ENCODE measurements at regions of chr11 and their contacts with region 1.

Region 1: GRCh38 chr11:62880803-62881578 is at the start of gene SLC3A2:
- DNase-seq: peak; percentile 95
- H3K4me3 Mint-ChIP-seq: peak within 1 kb of the TSS; percentile 100
- H3K27ac Mint-ChIP-seq: peak within 1 kb of the TSS; percentile 100
- H3K4me1 Mint-ChIP-seq: peaks cover 53% of the 10 kb centered on the region
- H3K27me3 Mint-ChIP-seq: peaks cover 1% of the 10 kb centered on the region
- total RNA-seq, gene SLC3A2: 364 and 379 TPM in 2 replicates

Region 2: GRCh38 chr11:62542750-62543567 is 338.0 kb before region 1 on chr11:
- intact Hi-C with region 1: loop called (anchors 1 kb)
- DNase-seq: peak; percentile 94
- H3K4me3 Mint-ChIP-seq: peak overlapping the region; percentile 99
- H3K27ac Mint-ChIP-seq: peak overlapping the region; percentile 95
- H3K4me1 Mint-ChIP-seq: peaks cover 68% of the 10 kb centered on the region
- H3K27me3 Mint-ChIP-seq: peaks cover 5% of the 10 kb centered on the region

Region 3: DNA sequence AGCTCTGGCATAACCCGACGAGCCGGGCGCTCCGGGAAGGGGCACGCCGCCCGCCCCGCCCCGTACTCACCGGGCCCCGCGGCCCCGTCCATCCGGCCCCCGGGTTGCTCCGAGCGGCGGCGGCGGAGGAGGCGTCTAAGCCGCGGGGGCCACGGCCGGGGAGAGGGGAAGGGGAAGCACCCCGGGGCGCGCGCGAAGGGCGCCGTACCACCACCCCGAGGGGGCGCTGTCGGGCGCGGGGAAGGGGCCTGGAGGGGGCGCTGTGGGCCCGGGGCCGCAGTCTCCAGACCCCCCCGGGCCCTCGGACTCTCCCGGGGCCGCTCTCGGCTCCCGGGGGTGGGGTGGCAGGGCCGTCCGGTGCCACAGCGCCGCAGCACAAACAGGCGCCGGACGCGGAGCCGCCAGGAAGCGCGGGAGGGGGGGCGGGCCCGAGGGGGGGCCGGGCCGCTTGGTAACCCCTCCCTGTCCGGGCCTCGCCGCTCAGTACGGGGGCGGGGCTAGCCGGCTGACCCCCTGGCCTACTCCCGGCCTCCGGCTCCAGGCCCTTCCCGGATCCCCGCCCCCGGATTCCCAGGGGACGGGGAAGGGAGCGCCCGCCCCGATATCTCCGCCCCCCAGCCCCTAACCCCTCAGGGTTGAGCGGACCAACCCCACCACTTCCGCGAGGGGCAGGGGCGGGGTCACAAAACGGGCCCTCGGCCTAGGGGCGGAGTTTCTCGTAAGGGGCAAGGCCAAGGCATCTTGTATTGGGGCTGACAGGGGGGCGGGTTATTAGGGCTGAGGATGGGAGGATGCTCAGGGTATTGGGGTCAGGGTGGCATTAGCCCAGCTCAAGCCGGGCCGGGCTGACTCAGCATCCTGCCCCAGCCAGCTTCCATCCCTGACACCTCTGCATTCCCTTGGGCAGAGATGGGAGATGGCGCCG is 268.4 kb before region 1 on chr11 and contains the starts of genes EML3 and ROM1:
- intact Hi-C with region 1: loop called (anchors 5 kb)
- DNase-seq: peak; percentile 97
- H3K4me3 Mint-ChIP-seq: peak within 1 kb of the TSS; percentile 98
- H3K27ac Mint-ChIP-seq: peak within 1 kb of the TSS; percentile 97
- H3K4me1 Mint-ChIP-seq: peaks cover 46% of the 10 kb centered on the region
- H3K27me3 Mint-ChIP-seq: no peaks in the 10 kb centered on the region
- total RNA-seq, gene EML3: 161 and 166 TPM in 2 replicates
- total RNA-seq, gene ROM1: 2.3 and 3.1 TPM in 2 replicates

Region 4: DNA sequence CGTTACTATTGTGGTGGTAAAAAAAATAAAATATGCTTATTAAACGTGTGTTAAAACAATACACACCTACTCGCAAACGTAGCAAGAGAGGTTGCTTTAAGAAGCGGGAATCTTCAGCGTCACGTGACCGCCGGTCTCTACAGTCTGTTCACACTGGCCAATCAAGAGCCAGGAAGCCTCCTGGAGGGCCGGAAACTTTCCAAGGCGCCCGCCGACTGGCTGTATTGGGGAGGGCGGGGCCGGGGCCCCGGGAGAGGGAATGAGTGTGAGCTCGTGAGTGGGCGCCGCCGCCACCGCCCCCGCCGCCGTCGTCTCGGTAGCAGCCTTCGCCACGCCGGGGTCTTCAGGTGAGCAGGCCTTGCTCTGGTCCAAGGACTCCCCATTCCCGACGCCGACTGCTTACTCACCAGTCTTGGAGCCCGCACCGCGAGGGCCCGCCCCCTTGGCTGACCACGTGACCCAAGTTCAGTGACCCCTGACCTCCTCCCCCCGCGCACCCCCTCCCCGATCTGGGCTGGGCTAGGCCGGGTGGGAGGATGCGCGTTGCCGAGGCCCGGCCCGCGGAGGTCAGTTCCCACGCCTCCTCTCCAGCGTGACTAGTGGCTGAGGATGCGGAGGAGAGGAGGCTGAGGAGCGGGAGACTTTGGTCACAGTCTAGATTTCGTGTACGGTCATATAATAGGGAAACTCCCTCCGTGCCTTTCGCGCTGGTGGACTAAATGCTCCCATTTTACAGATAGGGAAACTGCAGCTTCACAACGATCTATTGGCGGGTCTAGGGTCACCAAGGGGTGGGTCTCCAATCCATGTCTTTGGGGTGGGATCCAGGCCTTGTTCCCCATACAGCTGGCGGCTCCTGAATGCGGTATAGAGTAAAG is 109.6 kb before region 1 on chr11 and contains the start of gene TAF6L:
- intact Hi-C with region 1: loop called (anchors 1 kb)
- DNase-seq: peak; percentile 98
- H3K4me3 Mint-ChIP-seq: peak within 1 kb of the TSS; percentile 93
- H3K27ac Mint-ChIP-seq: peak within 1 kb of the TSS; percentile 96
- H3K4me1 Mint-ChIP-seq: peaks cover 26% of the 10 kb centered on the region
- H3K27me3 Mint-ChIP-seq: no peaks in the 10 kb centered on the region
- total RNA-seq, gene TAF6L: 20.1 and 20.2 TPM in 2 replicates

Region 5: DNA sequence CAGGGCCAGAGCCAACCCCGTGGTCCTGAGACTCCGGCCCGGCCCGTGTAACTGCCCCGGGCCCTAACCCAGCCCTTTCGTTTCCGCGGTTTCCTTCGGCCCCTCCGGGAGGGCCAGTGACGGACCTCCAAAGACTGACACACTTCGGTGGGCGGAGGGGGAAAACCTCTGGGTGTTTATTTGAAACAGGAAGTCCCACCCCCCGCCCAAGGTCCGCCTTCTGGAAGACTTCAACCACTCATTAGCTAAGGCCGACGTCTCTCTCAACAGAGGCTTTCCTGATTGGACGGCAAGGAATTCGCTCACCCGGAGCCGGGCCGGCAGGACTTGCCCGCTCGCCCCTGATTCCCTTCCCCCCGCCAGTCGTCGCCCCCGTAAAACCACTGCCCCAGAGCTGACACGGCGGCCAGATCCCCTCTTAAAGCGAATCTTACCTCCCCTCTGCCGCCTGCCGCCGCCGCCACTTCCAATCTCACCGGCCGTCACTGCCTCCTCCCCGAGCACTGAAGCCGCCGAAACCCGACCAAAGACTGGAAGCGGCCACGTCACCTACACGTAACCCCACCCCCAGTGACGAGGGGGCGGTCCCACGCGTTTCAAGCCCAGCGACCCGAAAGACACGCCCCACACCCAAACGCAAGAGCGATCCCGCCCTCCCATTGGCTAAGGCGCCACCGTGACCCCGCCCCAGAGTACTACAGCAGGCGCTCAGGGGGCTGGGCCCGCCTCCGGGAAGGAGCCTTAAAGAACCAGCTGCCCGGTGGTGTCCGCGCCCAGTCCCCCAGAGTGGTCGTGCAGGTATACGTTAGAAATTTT is 49.3 kb before region 1 on chr11 and contains the start of gene STX5:
- intact Hi-C with region 1: loop called (anchors 1 kb)
- DNase-seq: peak; percentile 100
- H3K4me3 Mint-ChIP-seq: peak within 1 kb of the TSS; percentile 89
- H3K27ac Mint-ChIP-seq: peak within 1 kb of the TSS; percentile 97
- H3K4me1 Mint-ChIP-seq: peaks cover 38% of the 10 kb centered on the region
- H3K27me3 Mint-ChIP-seq: no peaks in the 10 kb centered on the region
- total RNA-seq, gene STX5: 28.1 and 33.5 TPM in 2 replicates

Region 6: GRCh38 chr11:62905927-62906531 is 25.0 kb after region 1 on chr11:
- intact Hi-C with region 1: no loop called
- DNase-seq: peak; percentile 94
- H3K4me3 Mint-ChIP-seq: no peak overlapping the region
- H3K27ac Mint-ChIP-seq: no peak overlapping the region
- H3K4me1 Mint-ChIP-seq: peaks cover 24% of the 10 kb centered on the region
- H3K27me3 Mint-ChIP-seq: peaks cover 18% of the 10 kb centered on the region

Region 7: DNA sequence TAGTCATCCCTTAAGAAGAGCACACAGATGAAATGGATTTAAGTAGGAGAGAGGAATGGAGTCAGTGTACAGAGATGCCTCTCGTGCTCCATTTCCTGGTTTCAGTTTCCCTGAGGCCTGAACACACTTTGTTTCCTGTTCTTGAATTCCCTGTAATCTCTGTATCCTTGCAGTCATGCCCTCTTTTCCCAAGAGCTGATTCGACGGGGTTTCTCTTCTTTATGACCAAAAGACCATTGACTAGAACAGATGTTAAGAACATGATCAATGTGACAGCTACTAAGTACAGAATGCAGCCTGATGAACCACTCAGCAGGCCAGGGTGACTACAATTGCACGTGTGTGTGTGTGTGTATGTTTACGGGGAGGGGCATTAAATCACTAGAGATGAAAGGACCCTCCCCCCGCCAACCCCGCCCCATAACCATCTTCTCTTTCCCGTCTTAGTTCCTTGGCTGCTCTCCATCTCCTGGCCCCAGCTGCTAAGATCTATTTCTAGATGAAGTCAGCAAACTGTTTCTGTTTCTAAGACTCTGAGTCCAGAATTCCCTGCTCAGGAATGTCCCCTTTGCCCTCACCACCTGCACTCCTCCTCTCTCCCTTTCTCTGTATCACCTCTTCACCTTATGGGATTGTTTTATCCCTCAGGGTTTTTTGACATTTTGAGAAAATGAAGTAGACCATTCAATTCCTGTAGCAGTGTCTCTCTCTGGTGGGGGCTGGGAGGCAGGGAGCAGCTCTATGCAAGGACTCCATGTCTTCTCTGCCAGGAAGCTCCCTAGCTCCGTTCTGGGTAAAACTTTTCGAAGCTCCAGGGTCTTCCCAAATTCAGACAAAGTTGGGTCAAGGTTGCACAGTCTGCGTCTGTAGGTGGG is 77.8 kb after region 1 on chr11:
- intact Hi-C with region 1: no loop called
- DNase-seq: no peak
- H3K4me3 Mint-ChIP-seq: no peak overlapping the region
- H3K27ac Mint-ChIP-seq: no peak overlapping the region
- H3K4me1 Mint-ChIP-seq: peaks cover 3% of the 10 kb centered on the region
- H3K27me3 Mint-ChIP-seq: peaks cover 4% of the 10 kb centered on the region

Region 8: DNA sequence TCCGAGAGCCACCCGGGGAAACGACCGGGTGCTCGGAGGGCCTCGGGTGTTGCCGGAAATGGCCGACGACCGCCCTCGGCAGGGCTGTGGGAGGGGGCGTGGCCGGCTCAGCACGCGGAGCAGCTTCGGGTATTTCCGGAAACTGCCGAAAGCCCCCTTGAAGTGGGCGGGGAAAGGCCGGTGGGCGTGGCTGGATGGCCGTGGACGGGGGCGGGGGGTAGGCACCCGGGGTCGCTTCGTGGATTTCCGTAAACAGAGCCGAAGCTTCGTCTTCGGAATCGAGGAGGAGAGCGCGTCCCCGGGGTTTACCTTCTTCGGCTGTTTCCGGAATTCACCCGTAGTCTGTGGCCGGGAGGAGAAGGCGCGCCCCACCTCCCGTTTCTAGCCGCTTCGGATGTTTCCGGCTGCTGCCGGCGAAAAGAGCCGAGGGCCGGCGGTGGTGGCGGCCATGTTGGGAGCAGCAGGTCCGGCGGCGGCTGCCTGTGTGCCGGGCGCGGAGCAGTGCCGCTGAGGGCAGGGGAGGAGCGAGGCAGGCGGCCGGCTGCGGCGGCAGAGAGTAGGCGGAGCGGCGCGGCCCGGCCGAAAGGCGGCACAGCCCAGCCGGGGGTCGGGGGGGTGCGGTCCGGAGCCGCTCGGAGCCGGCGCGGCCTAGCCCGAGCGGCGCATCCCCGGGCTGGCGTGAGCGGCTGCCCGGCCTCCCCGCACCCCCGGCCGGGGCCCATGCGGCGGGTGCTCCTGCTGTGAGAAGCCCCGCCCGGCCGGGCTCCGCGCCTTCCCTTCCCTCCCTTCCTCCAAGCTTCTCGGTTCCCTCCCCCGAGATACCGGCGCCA is 957.9 kb after region 1 on chr11 and contains the start of gene MARK2:
- intact Hi-C with region 1: loop called (anchors 2 kb)
- DNase-seq: peak; percentile 100
- H3K4me3 Mint-ChIP-seq: peak within 1 kb of the TSS; percentile 92
- H3K27ac Mint-ChIP-seq: peak within 1 kb of the TSS; percentile 94
- H3K4me1 Mint-ChIP-seq: peaks cover 49% of the 10 kb centered on the region
- H3K27me3 Mint-ChIP-seq: no peaks in the 10 kb centered on the region
- total RNA-seq, gene MARK2: 34.2 and 41.0 TPM in 2 replicates